PC-9 (cell line): ENCODE measurements at regions of chr6 and their contacts with region 1.

Region 1: DNA sequence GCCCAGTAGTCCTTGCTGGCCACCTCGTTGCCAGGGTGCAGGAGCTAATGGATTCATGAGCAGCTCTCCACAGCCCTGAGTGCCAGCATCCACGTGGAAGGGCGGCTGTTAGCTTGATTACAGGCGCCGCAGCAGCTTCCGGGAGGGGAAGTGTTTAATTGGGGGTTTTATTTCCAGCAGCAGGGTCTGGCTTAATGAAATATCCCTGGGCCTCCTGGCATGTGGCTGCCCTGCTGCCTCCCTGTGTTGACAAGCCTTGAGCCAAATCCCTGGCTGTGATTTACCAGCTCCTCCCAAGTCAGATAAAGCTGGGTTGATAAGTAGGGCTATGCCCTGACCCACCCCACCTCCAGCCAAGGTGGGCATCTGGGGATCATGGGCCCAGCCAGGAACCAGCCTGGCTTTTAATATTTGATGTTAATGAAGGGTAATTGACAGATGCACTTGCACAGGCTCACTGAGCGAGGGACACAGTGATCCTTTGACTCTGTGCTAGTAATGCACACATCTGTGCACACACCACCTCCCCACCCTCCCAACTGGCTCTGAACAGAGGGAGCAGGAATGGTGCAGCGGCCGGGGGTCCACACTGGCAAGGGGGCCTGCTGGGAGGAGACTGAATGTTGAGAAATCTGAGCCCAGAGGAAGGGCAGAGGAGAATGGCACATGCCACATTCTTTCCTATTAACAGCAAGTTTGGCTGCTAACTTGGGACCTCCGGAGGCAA is 13.6 kb downstream of the GLP1R start:
- DNase-seq: no peak
- H3K4me3 ChIP-seq: no peak overlapping the region
- H3K27ac ChIP-seq: no peak overlapping the region
- H3K4me1 ChIP-seq: no peaks in the 10 kb centered on the region
- H3K27me3 ChIP-seq: peaks cover 99% of the 10 kb centered on the region
- CTCF ChIP-seq: no peak

Region 2: DNA sequence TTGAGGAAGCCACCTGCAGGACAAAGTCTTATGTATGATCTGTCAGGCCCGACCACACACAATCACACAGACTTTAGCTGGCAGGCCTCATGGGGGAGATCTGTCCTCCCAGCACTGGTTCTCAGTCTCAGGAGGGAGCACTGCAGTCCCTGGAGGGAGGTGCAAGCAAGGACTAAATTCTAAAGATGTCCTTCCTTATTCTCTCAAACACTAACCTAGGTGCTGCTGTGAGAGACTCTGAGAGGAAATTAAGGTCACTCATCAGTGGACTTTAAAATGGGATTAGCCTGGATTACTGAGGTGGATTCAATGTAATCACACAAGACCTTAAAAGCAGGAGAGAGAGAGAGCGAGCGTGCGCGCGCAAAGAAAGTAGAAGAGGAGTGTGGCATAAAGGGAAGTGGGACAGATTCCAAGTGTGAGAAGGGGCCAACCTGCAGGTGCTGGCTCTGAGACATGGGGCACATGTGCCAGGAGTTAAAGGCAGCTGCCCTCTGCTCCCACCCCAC is 373.5 kb before region 1 on chr6:
- CTCF ChIA-PET with region 1: no interaction called
- POLR2A ChIA-PET with region 1: no interaction called
- intact Hi-C with region 1: no loop called
- DNase-seq: no peak
- H3K4me3 ChIP-seq: no peak overlapping the region
- H3K27ac ChIP-seq: no peak overlapping the region
- H3K4me1 ChIP-seq: no peaks in the 10 kb centered on the region
- H3K27me3 ChIP-seq: no peaks in the 10 kb centered on the region
- CTCF ChIP-seq: no peak

Region 3: GRCh38 chr6:38739532-38739931 is 322.6 kb before region 1 on chr6:
- CTCF ChIA-PET with region 1: interaction called, 17 read pairs
- POLR2A ChIA-PET with region 1: no interaction called
- intact Hi-C with region 1: no loop called
- DNase-seq: no peak
- H3K4me3 ChIP-seq: no peak overlapping the region
- H3K27ac ChIP-seq: no peak overlapping the region
- H3K4me1 ChIP-seq: no peaks in the 10 kb centered on the region
- H3K27me3 ChIP-seq: no peaks in the 10 kb centered on the region
- CTCF ChIP-seq: no peak; the same call in 1 of the 2 replicates